SK-N-SH (cell line): ENCODE measurements at regions of chr3 and their contacts with region 1.

Region 1: GRCh38 chr3:12175844-12176453 is 17.2 kb upstream of the TIMP4 start:
- DNase-seq: peak; percentile 74
- H3K4me3 ChIP-seq: no peak overlapping the region; a peak in 1 of 4 replicates
- H3K27ac ChIP-seq: no peak overlapping the region
- H3K4me1 ChIP-seq: peaks cover 0 to 9% of the 10 kb centered on the region in 2 experiments; a peak in 2 of 4 replicates
- H3K27me3 ChIP-seq: no peaks in the 10 kb centered on the region
- CTCF ChIP-seq: peak; percentile 73
- EP300 ChIP-seq: no peak
- RAD21 ChIP-seq: peak; percentile 88

Region 2: DNA sequence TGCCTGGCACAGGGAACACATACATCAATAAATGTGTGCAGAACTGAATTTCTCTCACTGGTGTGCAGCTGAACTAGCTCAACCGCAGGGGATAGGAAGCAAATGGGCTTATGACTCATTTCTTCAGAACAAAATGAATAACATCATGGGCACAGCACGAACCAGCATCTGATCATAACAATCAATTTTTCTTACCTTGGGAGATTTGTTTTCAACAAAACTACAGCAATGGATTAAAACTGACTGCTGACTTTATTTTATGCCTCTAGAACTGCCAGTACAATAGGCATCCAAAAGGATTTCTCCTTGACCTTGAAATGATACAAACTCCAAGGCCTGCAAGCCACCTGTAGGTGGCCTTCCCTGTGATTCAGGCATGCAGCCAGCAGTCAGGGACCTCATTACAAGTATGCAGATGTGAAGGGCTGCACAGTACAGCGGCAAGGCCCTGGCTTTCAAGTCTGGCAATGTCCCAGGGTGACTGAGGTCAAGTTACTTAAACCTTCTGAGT is 355.4 kb before region 1 on chr3:
- CTCF ChIA-PET with region 1: no interaction called
- POLR2A ChIA-PET with region 1: no interaction called
- DNase-seq: no peak
- H3K4me3 ChIP-seq: no peak overlapping the region
- H3K27ac ChIP-seq: no peak overlapping the region
- H3K4me1 ChIP-seq: no peaks in the 10 kb centered on the region; a peak in 1 of 4 replicates
- H3K27me3 ChIP-seq: no peaks in the 10 kb centered on the region
- CTCF ChIP-seq: no peak
- EP300 ChIP-seq: no peak
- RAD21 ChIP-seq: no peak

Region 3: GRCh38 chr3:11846281-11847034 is 329.5 kb before region 1 on chr3 and contains the start of gene TAMM41:
- CTCF ChIA-PET with region 1: interaction called, 20 read pairs
- POLR2A ChIA-PET with region 1: no interaction called
- DNase-seq: peak; percentile 88
- H3K4me3 ChIP-seq: peak within 1 kb of the TSS; percentile 87
- H3K27ac ChIP-seq: peak within 1 kb of the TSS; percentile 53 to 86
- H3K4me1 ChIP-seq: peaks cover 0 to 9% of the 10 kb centered on the region in 2 experiments; a peak in 3 of 4 replicates
- H3K27me3 ChIP-seq: no peaks in the 10 kb centered on the region; the same call in 1 of the 2 replicates
- CTCF ChIP-seq: peak; percentile 68
- EP300 ChIP-seq: 0 out of 4 replicates have a peak, but pooled peaks of 1 of the 2 experiments have one; percentile 34
- RAD21 ChIP-seq: peak; percentile 46
- polyA plus RNA-seq, gene TAMM41: 14.3 and 16.6 TPM in 2 replicates

Region 4: GRCh38 chr3:12120374-12121140 is 55.4 kb before region 1 on chr3:
- CTCF ChIA-PET with region 1: interaction called, 11 read pairs
- POLR2A ChIA-PET with region 1: no interaction called
- DNase-seq: no peak
- H3K4me3 ChIP-seq: no peak overlapping the region
- H3K27ac ChIP-seq: no peak overlapping the region
- H3K4me1 ChIP-seq: no peaks in the 10 kb centered on the region; a peak in 1 of 4 replicates
- H3K27me3 ChIP-seq: no peaks in the 10 kb centered on the region
- CTCF ChIP-seq: no peak
- EP300 ChIP-seq: no peak
- RAD21 ChIP-seq: no peak

Region 5: GRCh38 chr3:12150112-12150511 is 25.8 kb before region 1 on chr3:
- CTCF ChIA-PET with region 1: interaction called, 229 read pairs
- POLR2A ChIA-PET with region 1: interaction called, 3 read pairs
- DNase-seq: no peak
- H3K4me3 ChIP-seq: no peak overlapping the region
- H3K27ac ChIP-seq: no peak overlapping the region
- H3K4me1 ChIP-seq: peaks cover 0 to 15% of the 10 kb centered on the region in 2 experiments; a peak in 1 of 4 replicates
- H3K27me3 ChIP-seq: no peaks in the 10 kb centered on the region; the same call in 1 of the 2 replicates
- CTCF ChIP-seq: no peak
- EP300 ChIP-seq: no peak
- RAD21 ChIP-seq: no peak

Region 6: GRCh38 chr3:12187448-12188327 is 11.7 kb after region 1 on chr3:
- CTCF ChIA-PET with region 1: interaction called, 23 read pairs
- POLR2A ChIA-PET with region 1: no interaction called
- DNase-seq: no peak
- H3K4me3 ChIP-seq: no peak overlapping the region
- H3K27ac ChIP-seq: peak overlapping the region in 1 of 2 experiments; percentile 85; a peak in 2 of 4 replicates
- H3K4me1 ChIP-seq: peaks cover 0 to 22% of the 10 kb centered on the region in 2 experiments; a peak in 3 of 4 replicates
- H3K27me3 ChIP-seq: no peaks in the 10 kb centered on the region
- CTCF ChIP-seq: no peak
- EP300 ChIP-seq: no peak
- RAD21 ChIP-seq: no peak

Region 7: GRCh38 chr3:12484198-12484974 is 308.4 kb after region 1 on chr3 and contains the start of gene TSEN2:
- CTCF ChIA-PET with region 1: interaction called, 33 read pairs
- POLR2A ChIA-PET with region 1: no interaction called
- DNase-seq: peak; percentile 99
- H3K4me3 ChIP-seq: peak within 1 kb of the TSS; percentile 96 to 99
- H3K27ac ChIP-seq: peak within 1 kb of the TSS; percentile 57 to 84; a peak in 3 of 4 replicates
- H3K4me1 ChIP-seq: peaks cover 11 to 18% of the 10 kb centered on the region in 2 experiments; a peak in 1 of 4 replicates
- H3K27me3 ChIP-seq: no peaks in the 10 kb centered on the region
- CTCF ChIP-seq: peak; percentile 27
- EP300 ChIP-seq: no peak; a peak in 1 of 4 replicates
- RAD21 ChIP-seq: peak; percentile 58
- polyA plus RNA-seq, gene TSEN2: 13.0 and 18.6 TPM in 2 replicates